Left ventricle myocardium superior (tissue), 1 donor: ENCODE measurements at regions of chr15 and their contacts with region 1.

Region 1: DNA sequence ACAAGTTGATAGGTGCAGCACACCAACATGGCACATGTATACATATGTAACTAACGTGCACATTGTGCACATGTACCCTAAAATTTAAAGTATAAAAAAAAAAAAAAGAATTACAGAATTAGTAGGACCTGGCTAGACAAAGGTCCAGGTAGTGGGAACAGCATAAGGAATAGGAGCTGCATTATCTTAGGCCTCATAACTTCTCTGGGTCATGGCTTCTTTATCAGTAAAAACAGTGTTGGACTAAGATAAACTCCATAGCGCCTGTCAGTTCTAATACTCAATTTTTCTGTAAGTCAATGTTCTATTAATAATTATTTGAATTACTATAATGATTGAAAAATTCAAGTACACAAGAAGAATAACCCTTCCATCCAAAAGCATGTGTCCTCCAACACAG is 98.3 kb downstream of the HERC1 start:
- DNase-seq: no peak
- ATAC-seq: no peak

Region 2: DNA sequence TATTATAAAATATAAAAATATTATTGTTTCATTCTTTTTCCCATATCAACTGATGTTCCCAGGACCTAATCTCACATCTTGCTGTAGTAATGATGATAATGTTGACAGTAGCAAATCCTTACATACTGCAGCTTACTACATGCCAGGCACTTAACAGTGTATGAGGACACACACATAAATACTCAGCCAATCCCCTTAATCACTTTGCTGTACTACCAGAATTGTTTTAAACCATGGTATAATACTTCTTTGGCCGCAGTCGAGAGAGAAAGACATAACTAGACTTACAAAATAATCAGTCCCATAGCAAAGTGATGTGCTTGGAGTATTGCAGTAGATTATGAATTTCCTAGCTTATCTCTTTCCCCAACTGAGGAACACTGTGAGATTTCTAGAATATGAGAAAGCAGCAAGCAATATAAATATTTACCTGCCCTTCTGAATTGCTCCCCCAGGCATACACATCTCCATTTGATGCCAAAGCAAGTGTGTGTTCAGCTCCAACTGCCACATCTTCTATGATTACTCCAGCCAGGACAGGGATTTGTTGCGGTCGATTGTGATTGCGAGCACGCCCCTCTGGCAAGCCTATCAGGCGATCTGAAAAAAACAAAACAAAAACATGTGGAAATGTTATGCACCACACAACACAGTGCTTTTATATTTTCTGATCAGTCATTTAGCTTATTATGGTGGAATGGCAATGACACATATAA is 105.3 kb before region 1 on chr15:
- intact Hi-C with region 1: loop called (anchors 10 kb)
- DNase-seq: no peak
- ATAC-seq: no peak

Region 3: GRCh38 chr15:64010719-64011118 is 275.3 kb after region 1 on chr15:
- intact Hi-C with region 1: no loop called
- DNase-seq: peak; percentile 73
- ATAC-seq: peak; percentile 75